ENCODE measurements at regions of chr7 and their contacts with region 1.

Region 1: GRCh38 chr7:38932509-38933168 is 23.6 kb upstream of the VPS41 start:
- DNase-seq: peak; percentile 53
- H3K4me3 Mint-ChIP-seq: no peak overlapping the region
- H3K27ac Mint-ChIP-seq: no peak overlapping the region
- H3K4me1 Mint-ChIP-seq: peaks cover 3% of the 10 kb centered on the region
- H3K27me3 Mint-ChIP-seq: peaks cover 9% of the 10 kb centered on the region

Region 2: GRCh38 chr7:38920731-38921130 is 11.9 kb before region 1 on chr7:
- CTCF ChIA-PET with region 1: interaction called, 10 read pairs
- POLR2A ChIA-PET with region 1: no interaction called
- DNase-seq: no peak
- H3K4me3 Mint-ChIP-seq: no peak overlapping the region
- H3K27ac Mint-ChIP-seq: no peak overlapping the region
- H3K4me1 Mint-ChIP-seq: no peaks in the 10 kb centered on the region
- H3K27me3 Mint-ChIP-seq: peaks cover 7% of the 10 kb centered on the region

Measured in activated CD4-positive, alpha-beta memory T cell treated with anti-CD3 and anti-CD28 coated beads, Interleukin-2, amount 10 ng/mL, durations not matched to agents 7 days and 5 days (primary cell).